ENCODE measurements at regions of chr17 and their contacts with region 1.

Region 1: DNA sequence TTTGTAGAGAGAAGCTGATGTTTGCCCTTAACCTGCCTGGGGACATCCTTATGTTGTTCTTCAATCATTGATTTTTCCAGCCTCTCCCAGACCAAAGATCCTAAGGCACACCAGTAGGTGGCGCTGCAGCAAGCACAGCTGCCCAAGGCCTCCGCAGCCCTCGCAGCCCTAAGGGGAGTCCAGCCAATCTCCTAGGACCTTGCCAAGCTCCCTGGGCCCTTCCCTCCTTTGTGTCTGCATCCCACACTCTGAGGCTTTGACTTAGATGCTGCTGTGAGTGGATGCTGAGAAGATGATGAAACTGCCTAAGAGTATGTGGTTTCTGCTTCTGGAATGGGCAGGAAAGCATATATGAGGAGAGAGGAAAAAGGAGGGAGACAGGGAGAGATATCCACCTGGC is 47.1 kb downstream of the SPACA3 start:
- H3K4me3 ChIP-seq: no peak overlapping the region
- H3K27ac ChIP-seq: no peak overlapping the region
- H3K4me1 ChIP-seq: no peaks in the 10 kb centered on the region
- CTCF ChIP-seq: peak; percentile 51

Region 2: GRCh38 chr17:32997753-32998632 is 40.7 kb before region 1 on chr17:
- CTCF ChIA-PET with region 1: interaction called, 10 read pairs
- POLR2A ChIA-PET with region 1: no interaction called
- H3K4me3 ChIP-seq: peak overlapping the region; percentile 26
- H3K27ac ChIP-seq: no peak overlapping the region
- H3K4me1 ChIP-seq: no peaks in the 10 kb centered on the region
- CTCF ChIP-seq: peak; percentile 85

Region 3: GRCh38 chr17:33021731-33022408 is 16.9 kb before region 1 on chr17:
- CTCF ChIA-PET with region 1: interaction called, 34 read pairs
- POLR2A ChIA-PET with region 1: no interaction called
- H3K4me3 ChIP-seq: no peak overlapping the region
- H3K27ac ChIP-seq: no peak overlapping the region
- H3K4me1 ChIP-seq: no peaks in the 10 kb centered on the region
- CTCF ChIP-seq: no peak

Region 4: DNA sequence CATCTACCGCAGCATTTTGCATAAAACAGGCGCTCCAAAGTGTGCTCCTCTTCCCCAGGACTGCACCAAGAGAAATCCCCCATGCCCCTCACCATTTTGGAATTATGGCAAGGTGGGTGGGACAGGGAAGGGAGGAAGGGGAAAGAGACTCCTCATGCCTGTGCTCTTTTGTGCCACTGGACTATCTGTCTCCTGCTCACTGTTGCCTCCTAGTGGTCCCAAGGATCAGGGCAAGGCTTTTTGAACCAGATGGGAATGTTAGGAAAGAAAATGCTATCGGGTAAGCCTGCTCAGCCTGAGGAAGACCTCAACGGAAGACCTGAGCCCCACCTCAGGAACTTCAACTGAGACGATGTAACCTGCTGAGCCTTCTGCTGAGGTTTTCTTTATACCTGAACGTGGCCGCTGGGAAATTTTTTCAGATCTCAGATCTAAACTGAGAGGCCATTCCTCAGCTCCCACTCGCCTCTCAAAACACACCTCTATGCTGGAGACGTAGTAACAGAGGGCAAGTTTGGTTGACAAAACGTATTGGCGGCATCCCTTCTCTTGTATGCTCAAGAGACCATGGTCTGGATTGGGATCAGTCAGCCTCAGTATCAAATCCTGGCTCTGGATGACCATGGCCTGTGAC is 11.2 kb after region 1 on chr17:
- CTCF ChIA-PET with region 1: interaction called, 33 read pairs
- POLR2A ChIA-PET with region 1: no interaction called
- H3K4me3 ChIP-seq: no peak overlapping the region
- H3K27ac ChIP-seq: no peak overlapping the region
- H3K4me1 ChIP-seq: no peaks in the 10 kb centered on the region
- CTCF ChIP-seq: peak; percentile 58; the same call in 1 of the 2 replicates

Region 5: GRCh38 chr17:33055171-33055611 is 16.5 kb after region 1 on chr17:
- CTCF ChIA-PET with region 1: interaction called, 27 read pairs
- POLR2A ChIA-PET with region 1: no interaction called
- H3K4me3 ChIP-seq: no peak overlapping the region
- H3K27ac ChIP-seq: no peak overlapping the region
- H3K4me1 ChIP-seq: no peaks in the 10 kb centered on the region
- CTCF ChIP-seq: no peak

Region 6: GRCh38 chr17:33258291-33258690 is 219.6 kb after region 1 on chr17:
- CTCF ChIA-PET with region 1: no interaction called
- POLR2A ChIA-PET with region 1: no interaction called
- H3K4me3 ChIP-seq: no peak overlapping the region
- H3K27ac ChIP-seq: no peak overlapping the region
- H3K4me1 ChIP-seq: no peaks in the 10 kb centered on the region
- CTCF ChIP-seq: no peak